ENCODE measurements at regions of chr6 and their contacts with region 1.

Region 1: DNA sequence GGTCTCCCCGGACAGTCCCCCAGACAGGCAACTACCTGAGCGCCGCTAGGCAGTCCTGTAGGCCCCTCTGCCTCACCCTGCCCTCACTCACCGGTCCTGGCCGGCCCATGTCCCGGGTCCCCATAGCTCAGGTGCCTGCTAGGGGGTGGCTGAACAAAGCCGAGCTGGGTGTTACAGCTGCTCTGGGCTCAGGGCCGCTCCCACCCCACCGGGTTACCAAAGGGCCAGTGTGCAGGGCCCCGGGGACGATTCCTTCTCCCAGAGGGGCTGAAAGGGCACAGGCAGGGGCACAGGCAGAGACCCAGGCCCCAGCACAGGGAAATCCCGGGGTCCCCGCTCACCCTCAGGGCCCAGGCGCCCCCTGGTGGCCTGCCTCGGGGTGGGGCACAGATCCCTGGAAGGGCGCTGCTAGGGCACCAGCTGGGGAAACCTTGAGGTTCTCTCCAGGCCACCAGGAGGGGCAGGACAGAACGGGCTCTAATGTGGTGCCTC is 118.4 kb downstream of the GRM4 start:
- DNase-seq: peak in 1 of 2 experiments; percentile 79
- H3K4me3 ChIP-seq: no peak overlapping the region
- H3K4me1 ChIP-seq: no peaks in the 10 kb centered on the region
- H3K27me3 ChIP-seq: peaks cover 8% of the 10 kb centered on the region

Region 2: GRCh38 chr6:33683051-33683571 is 344.4 kb before region 1 on chr6:
- in situ Hi-C with region 1: no loop called
- DNase-seq: no peak
- H3K4me3 ChIP-seq: no peak overlapping the region
- H3K4me1 ChIP-seq: no peaks in the 10 kb centered on the region
- H3K27me3 ChIP-seq: no peaks in the 10 kb centered on the region

Region 3: GRCh38 chr6:33768644-33769120 is 258.8 kb before region 1 on chr6:
- in situ Hi-C with region 1: loop called (anchors 5 kb)
- DNase-seq: peak; percentile 50 to 94
- H3K4me3 ChIP-seq: no peak overlapping the region
- H3K4me1 ChIP-seq: peaks cover 3% of the 10 kb centered on the region
- H3K27me3 ChIP-seq: no peaks in the 10 kb centered on the region

Region 4: DNA sequence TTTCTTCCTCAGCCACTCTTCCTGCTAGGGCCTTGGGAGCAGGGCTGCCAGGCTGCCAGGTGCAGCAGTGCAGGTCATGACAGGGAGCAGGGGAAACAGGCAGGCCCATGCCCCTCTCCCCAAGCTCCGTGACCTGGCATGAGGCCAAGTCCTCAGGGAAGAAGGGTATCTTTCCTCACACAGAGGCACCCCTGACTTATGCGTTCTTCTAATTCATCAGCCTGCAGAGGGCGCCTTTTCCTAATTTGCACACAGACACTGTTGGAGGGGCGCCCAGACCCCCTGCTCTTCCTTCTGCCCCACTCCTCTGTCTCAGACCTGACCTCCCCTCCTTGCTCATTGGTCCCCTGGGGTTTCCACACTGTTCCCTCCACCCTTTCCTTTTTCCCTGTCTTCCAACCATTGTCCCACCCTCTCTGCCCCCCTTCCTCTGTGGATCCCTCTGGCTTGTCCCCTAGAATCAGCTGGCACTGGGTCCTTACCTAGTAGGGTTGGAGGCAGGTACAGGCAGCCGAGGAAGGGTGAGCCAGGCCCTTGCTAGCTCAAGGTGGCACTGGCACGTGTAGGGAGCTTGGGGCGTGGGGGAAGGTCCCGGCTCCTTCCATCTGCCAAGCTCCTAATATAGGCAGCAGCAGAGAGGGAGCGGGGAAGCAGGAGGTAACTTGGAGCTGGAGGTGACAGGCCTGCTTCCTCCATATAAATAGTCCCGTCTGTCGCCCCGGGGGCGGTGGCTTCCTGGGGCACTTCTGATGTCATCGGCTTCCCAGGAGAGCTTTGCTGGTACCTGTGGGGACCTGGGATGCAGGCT is 68.8 kb before region 1 on chr6:
- in situ Hi-C with region 1: no loop called
- DNase-seq: peak in 1 of 2 experiments; percentile 53
- H3K4me3 ChIP-seq: no peak overlapping the region
- H3K4me1 ChIP-seq: peaks cover 11% of the 10 kb centered on the region
- H3K27me3 ChIP-seq: no peaks in the 10 kb centered on the region

Region 5: DNA sequence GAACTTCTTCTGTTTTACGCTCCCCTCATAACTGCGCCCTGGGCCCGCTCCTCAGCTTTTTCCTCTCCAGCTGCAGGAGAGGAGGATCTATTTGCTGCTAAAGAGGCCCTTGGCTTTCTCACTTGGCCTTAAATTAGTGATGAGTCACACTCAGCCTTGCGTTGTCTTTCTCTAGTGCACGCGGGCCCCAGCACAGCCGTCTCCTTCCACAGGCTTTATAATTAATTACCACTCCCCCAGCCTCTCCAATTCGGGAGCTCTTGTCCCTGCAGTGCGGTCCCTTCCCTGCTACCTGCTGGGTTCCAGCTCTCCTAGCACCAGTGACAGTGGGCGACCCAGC is 463.6 kb after region 1 on chr6:
- in situ Hi-C with region 1: no loop called
- DNase-seq: no peak
- H3K4me3 ChIP-seq: no peak overlapping the region
- H3K4me1 ChIP-seq: no peaks in the 10 kb centered on the region
- H3K27me3 ChIP-seq: no peaks in the 10 kb centered on the region

Measured in HAP-1 (cell line).